ENCODE measurements at regions of chr12 and their contacts with region 1.

Region 1: GRCh38 chr12:117134059-117134458 is 34.8 kb upstream of the TESC start:
- DNase-seq: peak; percentile 49
- H3K4me3 Mint-ChIP-seq: peak overlapping the region; percentile 2
- H3K27ac Mint-ChIP-seq: peak overlapping the region; percentile 88
- H3K4me1 Mint-ChIP-seq: peaks cover 12% of the 10 kb centered on the region
- H3K27me3 Mint-ChIP-seq: no peaks in the 10 kb centered on the region

Region 2: DNA sequence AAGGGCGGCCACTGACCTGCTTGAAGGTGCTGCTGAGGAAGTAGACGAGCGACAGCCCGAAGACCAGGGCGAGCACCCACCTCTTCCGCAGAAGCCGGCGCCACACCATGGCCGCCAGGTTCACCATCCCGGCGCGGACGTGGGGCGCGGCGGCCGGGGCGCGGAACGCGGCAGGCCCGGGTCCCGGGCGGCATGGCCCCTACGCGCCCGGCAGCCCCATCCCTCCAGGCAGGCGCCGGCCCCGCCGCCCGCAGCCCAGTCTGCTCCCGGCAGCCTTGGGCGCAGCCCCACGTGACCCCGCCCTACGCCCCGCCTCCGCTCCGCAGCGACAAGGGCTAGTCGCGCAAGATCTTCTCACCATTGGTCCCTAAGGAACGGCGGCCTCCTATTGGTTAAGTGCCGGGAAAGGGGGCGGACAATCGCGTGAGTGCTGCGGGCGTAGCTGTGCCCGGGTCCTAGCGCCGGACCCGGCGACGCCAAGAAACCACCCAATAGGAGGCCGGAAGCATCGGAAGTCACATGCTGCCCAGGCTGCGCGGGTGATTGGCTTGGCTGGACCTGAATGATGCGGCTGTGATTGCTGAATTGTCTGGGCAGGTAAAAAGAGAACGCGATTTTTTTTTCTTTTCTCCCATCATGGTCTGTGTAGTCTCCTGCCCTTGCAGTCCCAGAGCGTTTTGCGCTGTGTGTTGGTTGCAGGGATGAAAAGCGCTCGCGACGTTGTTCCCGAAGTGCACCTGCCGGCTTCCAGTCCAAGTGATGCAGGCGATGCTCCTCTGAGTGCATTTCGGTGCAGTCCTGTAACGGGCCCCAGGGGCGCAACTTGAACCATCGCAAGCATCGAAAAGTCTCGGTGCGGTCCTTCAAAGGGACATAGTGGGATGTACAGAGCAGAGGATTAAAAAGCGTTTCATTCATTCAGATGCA is 396.0 kb before region 1 on chr12 and contains the starts of genes RNFT2 and SPRING1:
- intact Hi-C with region 1: loop called (anchors 10 kb)
- DNase-seq: peak; percentile 99
- H3K4me3 Mint-ChIP-seq: peak within 1 kb of the TSS; percentile 87
- H3K27ac Mint-ChIP-seq: peak within 1 kb of the TSS; percentile 42
- H3K4me1 Mint-ChIP-seq: peaks cover 18% of the 10 kb centered on the region
- H3K27me3 Mint-ChIP-seq: no peaks in the 10 kb centered on the region
- total RNA-seq, gene RNFT2: 11.0 and 14.4 TPM in 2 replicates
- total RNA-seq, gene SPRING1: 32.4 and 36.1 TPM in 2 replicates

Region 3: DNA sequence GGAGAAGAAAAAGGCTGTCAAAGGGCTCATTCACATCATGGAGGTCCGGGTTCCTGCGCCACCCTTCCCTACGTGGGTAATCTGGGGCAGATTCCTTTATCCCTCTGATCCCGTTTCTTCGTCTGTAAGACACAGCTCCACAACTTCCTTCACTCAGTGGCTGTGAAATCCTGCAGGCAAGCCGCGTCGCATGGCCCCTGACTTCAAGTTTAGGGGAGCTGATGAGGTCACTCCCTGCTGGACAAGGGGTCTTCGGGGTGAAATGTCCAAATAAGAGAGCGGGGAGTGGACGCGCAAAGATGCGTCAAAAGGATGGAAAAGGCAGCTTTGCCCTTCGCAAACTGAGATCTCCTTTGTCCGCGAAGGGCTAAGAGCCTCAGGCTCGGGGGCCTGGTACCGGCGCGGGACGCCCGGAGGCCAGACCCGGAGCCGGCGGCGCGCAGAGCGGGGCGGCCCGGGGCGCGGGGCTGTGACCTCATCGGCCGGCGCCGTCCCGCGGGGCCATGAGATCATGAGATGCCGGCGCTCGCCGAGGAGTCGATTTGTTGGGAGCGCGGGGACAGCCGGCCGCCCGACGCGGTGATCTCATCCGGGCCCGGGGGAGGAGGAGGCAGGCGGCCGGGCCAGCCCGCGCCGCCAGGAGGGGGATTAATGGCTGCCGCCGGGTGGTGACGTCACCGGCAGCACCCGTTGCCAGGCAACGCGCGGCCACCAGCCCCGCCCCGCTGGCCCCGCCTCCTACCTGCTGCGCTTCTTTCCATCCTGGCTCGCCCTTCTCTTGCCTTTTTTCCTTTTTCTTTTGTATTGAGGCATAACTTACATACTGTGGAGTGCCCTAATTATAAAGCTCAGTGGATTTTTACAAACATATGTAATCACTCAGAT is 314.9 kb before region 1 on chr12:
- intact Hi-C with region 1: loop called (anchors 1 kb)
- DNase-seq: peak; percentile 85
- H3K4me3 Mint-ChIP-seq: peak overlapping the region; percentile 95
- H3K27ac Mint-ChIP-seq: peak overlapping the region; percentile 95
- H3K4me1 Mint-ChIP-seq: peaks cover 13% of the 10 kb centered on the region
- H3K27me3 Mint-ChIP-seq: peaks cover 5% of the 10 kb centered on the region

Region 4: GRCh38 chr12:117098361-117099217 is 35.5 kb before region 1 on chr12:
- intact Hi-C with region 1: loop called (anchors 1 kb)
- DNase-seq: peak; percentile 22
- H3K4me3 Mint-ChIP-seq: peak overlapping the region; percentile 77
- H3K27ac Mint-ChIP-seq: no peak overlapping the region
- H3K4me1 Mint-ChIP-seq: peaks cover 21% of the 10 kb centered on the region
- H3K27me3 Mint-ChIP-seq: peaks cover 21% of the 10 kb centered on the region

Region 5: DNA sequence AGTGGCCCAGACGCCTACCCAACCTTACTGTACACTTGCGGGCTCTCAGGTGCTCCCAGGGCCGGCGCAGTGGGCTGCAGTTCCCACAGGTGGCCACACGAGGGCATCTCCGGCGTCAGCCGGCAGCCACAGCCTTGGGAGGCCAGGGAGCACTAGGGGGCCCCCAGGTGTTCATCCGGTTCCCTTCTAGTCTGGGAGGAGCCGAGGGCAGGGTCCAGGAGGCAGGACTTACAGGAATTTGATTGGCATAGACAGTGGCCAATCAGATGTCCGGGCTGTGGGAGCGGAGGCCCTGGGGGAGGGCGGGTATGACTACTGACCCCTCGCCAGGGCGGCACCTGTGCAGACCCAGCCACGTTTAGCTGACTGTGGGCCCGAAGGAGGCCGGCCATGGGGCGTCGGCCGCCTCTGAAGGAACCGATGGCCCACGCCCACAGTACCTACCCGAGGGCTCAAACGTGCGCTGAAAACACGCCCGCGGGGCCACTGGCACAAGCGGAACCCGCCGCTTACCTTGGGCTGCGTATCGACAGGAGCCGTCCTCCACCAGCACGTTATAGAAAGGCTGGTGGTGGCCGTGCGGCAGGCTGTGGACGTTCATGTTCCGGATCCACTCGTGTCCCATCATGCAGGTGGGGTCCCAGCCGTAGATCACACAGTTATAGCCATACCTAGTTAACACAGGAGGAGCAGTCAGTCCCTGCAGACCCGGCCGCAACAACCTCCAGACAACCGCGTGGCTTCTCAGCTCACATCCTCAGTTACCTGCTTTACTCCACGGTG is 21.4 kb after region 1 on chr12:
- intact Hi-C with region 1: loop called (anchors 1 kb)
- DNase-seq: peak; percentile 57
- H3K4me3 Mint-ChIP-seq: no peak overlapping the region
- H3K27ac Mint-ChIP-seq: no peak overlapping the region
- H3K4me1 Mint-ChIP-seq: peaks cover 21% of the 10 kb centered on the region
- H3K27me3 Mint-ChIP-seq: no peaks in the 10 kb centered on the region